Activated CD4-positive, alpha-beta memory T cell treated with anti-CD3 and anti-CD28 coated beads for 36 hours (primary cell): ENCODE measurements at regions of chr16 and their contacts with region 1.

Region 1: DNA sequence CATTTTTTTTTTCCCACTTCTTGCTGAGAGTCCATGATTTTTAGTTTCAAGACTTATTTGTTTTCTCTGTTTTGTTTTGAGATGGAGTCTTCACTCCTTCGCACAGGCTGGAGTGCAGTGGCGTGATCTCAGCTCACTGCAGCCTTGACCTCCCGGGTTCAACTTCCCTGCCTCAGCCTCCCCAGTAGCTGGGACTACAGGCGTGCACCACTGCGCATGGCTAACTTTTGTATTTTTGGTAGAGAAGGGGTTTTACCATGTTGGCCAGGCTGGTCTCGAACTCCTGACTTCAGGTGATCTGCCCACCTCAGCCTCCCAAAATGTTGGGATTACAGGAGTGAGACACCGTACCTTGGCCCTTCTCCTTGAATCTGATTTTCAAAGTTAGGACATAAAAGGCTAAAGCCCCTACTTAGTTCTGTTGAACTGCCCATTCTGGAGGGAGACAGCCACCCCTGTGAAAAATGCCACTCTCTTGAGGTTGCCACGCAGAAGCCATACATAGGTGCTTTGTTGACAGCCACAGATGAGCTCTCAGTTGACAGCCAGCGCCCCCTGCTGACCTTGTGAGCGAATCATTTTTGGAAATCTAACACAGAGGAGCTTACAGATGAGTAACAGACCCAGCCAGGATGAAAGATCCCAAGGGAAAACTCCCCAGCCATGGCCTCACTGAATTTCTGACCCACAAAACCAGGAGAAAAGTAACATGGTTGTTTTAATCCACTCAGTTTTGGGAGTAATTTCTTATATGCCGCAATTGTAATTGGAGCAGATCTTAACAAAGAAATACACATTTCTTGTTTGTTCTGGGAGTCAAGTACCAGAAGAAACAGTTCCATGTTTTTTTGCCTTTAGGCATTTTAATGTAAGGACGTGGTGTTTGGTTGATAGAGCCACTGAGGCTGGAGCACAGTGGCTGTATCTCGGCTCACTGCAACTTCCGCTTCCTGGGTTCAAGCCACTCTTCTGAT is 38.8 kb downstream of the PKD1L3 start:
- DNase-seq: peak; percentile 90
- H3K4me3 Mint-ChIP-seq: no peak overlapping the region
- H3K27ac Mint-ChIP-seq: no peak overlapping the region
- H3K4me1 Mint-ChIP-seq: peaks cover 2% of the 10 kb centered on the region
- H3K27me3 Mint-ChIP-seq: no peaks in the 10 kb centered on the region

Region 2: DNA sequence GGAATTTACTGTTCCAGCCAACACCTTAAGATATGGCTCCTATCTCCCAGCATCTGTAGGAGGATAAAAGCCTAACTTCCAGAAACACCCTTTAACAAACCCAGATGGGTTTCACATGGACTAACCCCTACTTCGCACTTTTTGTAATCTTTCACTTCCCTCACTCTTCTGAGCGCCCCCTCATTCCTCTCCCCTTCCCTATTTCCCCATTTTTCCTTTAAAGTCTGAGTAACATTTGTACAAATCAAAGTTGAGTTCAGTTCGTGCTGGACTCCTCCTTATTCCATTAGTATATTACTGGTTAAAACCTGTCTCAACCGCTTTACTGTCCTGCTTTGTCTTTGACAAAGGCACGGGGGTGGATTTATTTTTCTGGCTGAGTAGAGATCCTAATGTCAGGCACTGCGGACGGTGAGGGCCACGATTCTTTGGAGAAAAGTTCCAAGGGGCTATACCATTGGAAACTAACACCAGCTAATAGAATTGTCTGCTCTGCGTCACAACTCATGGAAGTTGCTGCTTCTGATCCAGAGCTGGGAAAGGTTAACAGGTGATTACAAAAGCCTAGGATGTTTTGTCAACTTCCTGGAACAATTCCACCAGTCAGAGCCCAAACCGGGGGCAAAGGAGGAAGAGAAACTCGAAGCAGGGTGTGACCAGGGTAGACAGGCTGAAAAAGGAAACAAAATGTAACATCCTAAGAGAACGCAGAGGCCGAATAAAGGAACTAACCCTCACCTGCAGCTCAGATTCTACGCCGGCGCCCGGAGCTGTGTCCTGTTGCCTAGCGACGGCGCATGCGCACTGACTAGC is 397.0 kb before region 1 on chr16:
- CTCF ChIA-PET with region 1: interaction called, 8 read pairs
- POLR2A ChIA-PET with region 1: no interaction called
- intact Hi-C with region 1: loop called (anchors 1 kb)
- DNase-seq: no peak
- H3K4me3 Mint-ChIP-seq: peak overlapping the region; percentile 79
- H3K27ac Mint-ChIP-seq: peak overlapping the region; percentile 92
- H3K4me1 Mint-ChIP-seq: peaks cover 14% of the 10 kb centered on the region
- H3K27me3 Mint-ChIP-seq: no peaks in the 10 kb centered on the region

Region 3: DNA sequence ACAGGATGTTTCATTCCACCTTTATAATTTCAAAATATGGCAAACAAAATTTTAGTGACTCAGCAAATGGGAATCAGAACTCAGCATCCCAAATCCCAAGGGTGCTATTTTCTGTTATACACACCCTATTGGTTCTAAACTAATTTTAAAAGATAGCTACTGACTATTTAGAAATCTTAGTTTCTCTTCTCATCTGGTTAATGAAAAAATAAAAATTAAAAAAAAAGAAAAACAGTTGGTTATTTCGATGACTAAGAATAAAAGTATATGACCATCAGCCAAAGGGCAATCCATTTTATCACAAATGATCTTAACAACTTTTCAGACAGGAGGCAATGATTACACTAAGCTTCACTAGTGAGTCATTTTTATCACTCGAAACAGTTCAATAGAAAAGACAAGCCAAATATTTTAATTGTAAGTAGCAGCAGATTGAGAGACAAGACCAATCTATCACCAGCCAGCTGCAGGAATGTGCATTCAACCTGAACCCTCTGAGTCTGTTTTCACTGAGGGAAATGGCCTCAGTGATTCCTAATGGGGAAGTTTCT is 252.0 kb before region 1 on chr16:
- CTCF ChIA-PET with region 1: no interaction called
- POLR2A ChIA-PET with region 1: no interaction called
- intact Hi-C with region 1: no loop called
- DNase-seq: no peak
- H3K4me3 Mint-ChIP-seq: no peak overlapping the region
- H3K27ac Mint-ChIP-seq: no peak overlapping the region
- H3K4me1 Mint-ChIP-seq: peaks cover 5% of the 10 kb centered on the region
- H3K27me3 Mint-ChIP-seq: no peaks in the 10 kb centered on the region

Region 4: GRCh38 chr16:71758293-71758760 is 203.0 kb before region 1 on chr16:
- CTCF ChIA-PET with region 1: interaction called, 6 read pairs
- POLR2A ChIA-PET with region 1: interaction called, 3 read pairs
- intact Hi-C with region 1: loop called (anchors 10 kb)
- DNase-seq: no peak
- H3K4me3 Mint-ChIP-seq: no peak overlapping the region
- H3K27ac Mint-ChIP-seq: peak overlapping the region; percentile 24
- H3K4me1 Mint-ChIP-seq: peaks cover 20% of the 10 kb centered on the region
- H3K27me3 Mint-ChIP-seq: no peaks in the 10 kb centered on the region

Region 5: GRCh38 chr16:71929048-71929447 is 32.3 kb before region 1 on chr16:
- CTCF ChIA-PET with region 1: interaction called, 13 read pairs
- POLR2A ChIA-PET with region 1: no interaction called
- intact Hi-C with region 1: no loop called
- DNase-seq: no peak
- H3K4me3 Mint-ChIP-seq: no peak overlapping the region
- H3K27ac Mint-ChIP-seq: no peak overlapping the region
- H3K4me1 Mint-ChIP-seq: peaks cover 14% of the 10 kb centered on the region
- H3K27me3 Mint-ChIP-seq: no peaks in the 10 kb centered on the region

Region 6: DNA sequence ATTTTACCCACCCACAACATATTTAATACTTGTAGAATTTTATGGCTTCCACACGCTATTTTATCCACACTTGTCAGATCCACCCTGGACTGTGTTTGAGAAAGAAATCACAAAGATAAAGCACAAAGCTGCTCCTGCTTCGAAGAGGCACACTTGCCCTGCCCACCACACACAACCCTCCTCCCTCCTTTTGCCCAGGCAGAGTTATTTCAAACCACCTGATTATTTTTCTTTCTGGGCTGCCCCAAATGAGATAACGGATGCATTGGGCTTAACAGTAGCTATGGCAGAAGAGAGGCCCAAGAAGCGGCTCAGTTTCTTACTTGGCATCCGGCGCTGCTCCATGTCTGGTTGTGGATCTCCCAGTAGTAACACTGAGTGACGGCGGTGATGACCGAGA is 11.6 kb after region 1 on chr16:
- CTCF ChIA-PET with region 1: interaction called, 17 read pairs
- POLR2A ChIA-PET with region 1: no interaction called
- intact Hi-C with region 1: no loop called
- DNase-seq: no peak
- H3K4me3 Mint-ChIP-seq: no peak overlapping the region
- H3K27ac Mint-ChIP-seq: no peak overlapping the region
- H3K4me1 Mint-ChIP-seq: no peaks in the 10 kb centered on the region
- H3K27me3 Mint-ChIP-seq: no peaks in the 10 kb centered on the region